HEK293T (cell line): ENCODE measurements at regions of chr6 and their contacts with region 1.

Region 1: GRCh38 chr6:75243333-75244062 is at the start of gene COX7A2:
- DNase-seq: peak; percentile 86

Region 2: DNA sequence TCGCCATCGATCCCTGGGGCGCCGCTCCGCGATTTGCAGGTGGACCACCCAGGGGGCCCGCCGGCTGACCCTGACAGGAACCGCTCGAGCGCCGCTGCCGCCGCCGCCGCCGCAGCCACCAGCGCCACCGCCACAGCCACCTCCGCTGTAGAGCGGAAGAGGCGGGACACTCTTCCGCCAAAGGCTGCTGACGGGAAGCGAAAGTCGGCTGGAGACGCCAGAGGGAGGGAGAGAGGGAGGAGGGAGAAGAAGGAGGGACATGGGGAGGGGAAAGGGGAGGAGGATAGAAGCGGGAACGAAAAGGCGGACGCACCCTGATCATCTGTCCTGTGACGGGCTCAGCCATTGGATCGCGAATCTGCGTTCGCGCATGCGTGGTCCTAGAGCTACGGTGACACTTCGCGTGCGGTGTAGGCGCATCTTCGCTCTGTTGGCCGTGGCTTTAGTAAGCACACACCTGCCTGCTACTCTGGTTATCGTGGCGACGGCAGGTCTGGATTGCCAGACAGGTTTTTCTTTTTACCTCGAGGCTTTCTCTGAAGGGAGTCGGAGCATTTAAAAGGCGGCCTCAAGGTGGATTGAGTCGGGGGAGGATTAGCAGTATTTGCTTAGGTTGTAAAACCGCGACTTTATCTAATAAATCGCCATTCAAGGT is 41.3 kb after region 1 on chr6 and contains the start of gene TMEM30A:
- CTCF ChIA-PET with region 1: no interaction called
- POLR2A ChIA-PET with region 1: interaction called, 10 read pairs
- DNase-seq: peak; percentile 92